ENCODE measurements at regions of chr4 and their contacts with region 1.

Region 1: DNA sequence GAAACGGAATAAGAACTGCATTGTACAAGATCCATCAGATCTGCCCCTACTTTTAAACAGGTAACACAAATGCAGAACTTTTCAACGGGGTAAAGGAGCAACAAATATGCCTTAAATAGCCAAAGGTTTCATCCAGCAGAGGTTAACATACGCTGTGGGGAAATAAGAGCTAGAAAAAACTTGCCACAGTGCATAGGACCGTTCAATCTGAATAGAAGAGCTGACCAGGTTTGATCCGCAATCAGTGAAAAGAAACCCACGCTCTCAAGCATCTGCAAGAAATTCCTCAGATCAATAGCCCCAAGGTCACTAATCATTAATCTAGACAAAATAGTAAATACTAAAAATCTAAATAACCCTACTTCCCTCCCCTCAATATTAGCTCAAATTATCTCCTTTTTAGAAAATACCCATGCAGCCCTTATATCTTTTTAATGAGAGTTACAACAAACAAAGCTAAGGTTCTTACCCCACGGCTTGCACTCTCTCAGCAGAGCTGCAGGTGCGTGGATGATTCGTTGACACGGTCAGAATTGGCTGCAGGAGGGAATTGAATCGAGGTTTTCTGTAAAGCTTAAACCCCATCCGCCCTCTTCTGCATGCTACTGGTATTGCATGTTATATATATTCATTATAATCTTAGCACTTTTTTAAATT is at the start of gene TLR10:
- DNase-seq: peak in 13 of 35 experiments; percentile 18 to 73 (median 28)
- ATAC-seq: peak; percentile 51 to 73 (median 64)
- H3K4me3 ChIP-seq: no peak within 1 kb of the TSS
- H3K4me3 Mint-ChIP-seq: peak within 1 kb of the TSS in 1 of 3 donors; percentile 71
- H3K27ac ChIP-seq: no peak within 1 kb of the TSS
- H3K27ac Mint-ChIP-seq: peak within 1 kb of the TSS in 1 of 2 donors; percentile 44
- H3K4me1 ChIP-seq: peaks cover 0 to 2% of the 10 kb centered on the region in 2 experiments
- H3K4me1 Mint-ChIP-seq: peaks cover 3 to 6% (median 5%) of the 10 kb centered on the region in 3 donors
- H3K27me3 ChIP-seq: no peaks in the 10 kb centered on the region
- H3K27me3 Mint-ChIP-seq: no peaks in the 10 kb centered on the region
- total RNA-seq, gene TLR10: 0.47 to 2.6 (median 0.96) TPM

Region 2: GRCh38 chr4:38062088-38062893 is 720.3 kb before region 1 on chr4:
- CTCF ChIA-PET with region 1: interaction called, 3 to 13 read pairs
- POLR2A ChIA-PET with region 1: no interaction called
- DNase-seq: peak; percentile 9 to 82 (median 48)
- ATAC-seq: peak; percentile 55 to 76 (median 65)
- H3K4me3 ChIP-seq: peak overlapping the region; percentile 26 to 39
- H3K4me3 Mint-ChIP-seq: peak overlapping the region; percentile 85 to 87 (median 86)
- H3K27ac ChIP-seq: no peak overlapping the region
- H3K27ac Mint-ChIP-seq: peak overlapping the region; percentile 70 to 81
- H3K4me1 ChIP-seq: peaks cover 0 to 7% of the 10 kb centered on the region in 2 experiments
- H3K4me1 Mint-ChIP-seq: peaks cover 14 to 16% (median 15%) of the 10 kb centered on the region in 3 donors
- H3K27me3 ChIP-seq: no peaks in the 10 kb centered on the region
- H3K27me3 Mint-ChIP-seq: no peaks in the 10 kb centered on the region

Region 3: DNA sequence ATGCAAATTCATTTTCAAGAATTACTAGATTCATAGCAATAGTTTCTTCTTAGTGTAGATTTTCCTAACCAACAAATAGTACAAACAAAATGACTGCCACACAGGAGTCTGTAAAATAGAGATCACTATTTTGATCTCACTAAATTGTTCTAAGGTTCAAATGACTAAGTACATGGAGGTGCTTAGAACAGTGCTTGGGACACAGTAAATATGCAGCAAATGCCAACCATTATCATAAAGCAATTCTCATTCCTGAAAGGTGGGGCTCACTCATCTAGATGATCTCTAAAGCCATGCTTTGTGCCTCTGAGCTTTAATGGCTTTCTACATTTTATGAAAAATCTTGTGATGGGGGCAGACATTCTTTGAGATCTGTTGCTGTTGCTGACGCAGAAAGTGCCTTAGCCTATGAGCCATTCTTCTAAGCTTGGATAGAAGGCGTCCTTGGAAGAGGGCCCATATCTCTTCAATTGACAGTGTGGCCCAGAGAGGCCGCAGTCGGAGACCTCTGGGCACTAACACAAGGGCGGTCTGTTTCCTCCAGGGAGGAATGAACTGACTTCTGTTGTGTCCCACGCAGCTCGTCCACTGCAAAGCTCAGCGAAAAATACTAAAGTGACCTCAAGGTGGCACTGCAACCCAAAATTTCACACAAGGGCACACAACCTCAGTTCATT is 23.3 kb before region 1 on chr4:
- CTCF ChIA-PET with region 1: interaction called, 20 to 32 read pairs
- POLR2A ChIA-PET with region 1: interaction called in 1 of 2 experiments, 3 read pairs
- DNase-seq: peak in 30 of 35 experiments; percentile 19 to 82 (median 43)
- ATAC-seq: peak; percentile 61 to 85 (median 75)
- H3K4me3 ChIP-seq: no peak overlapping the region
- H3K4me3 Mint-ChIP-seq: no peak overlapping the region
- H3K27ac ChIP-seq: no peak overlapping the region
- H3K27ac Mint-ChIP-seq: peak overlapping the region in 1 of 2 donors; percentile 8
- H3K4me1 ChIP-seq: peaks cover 0 to 10% of the 10 kb centered on the region in 2 experiments
- H3K4me1 Mint-ChIP-seq: peaks cover 20 to 27% (median 24%) of the 10 kb centered on the region in 3 donors
- H3K27me3 ChIP-seq: peaks cover 0 to 2% of the 10 kb centered on the region in 2 experiments
- H3K27me3 Mint-ChIP-seq: no peaks in the 10 kb centered on the region

Region 4: DNA sequence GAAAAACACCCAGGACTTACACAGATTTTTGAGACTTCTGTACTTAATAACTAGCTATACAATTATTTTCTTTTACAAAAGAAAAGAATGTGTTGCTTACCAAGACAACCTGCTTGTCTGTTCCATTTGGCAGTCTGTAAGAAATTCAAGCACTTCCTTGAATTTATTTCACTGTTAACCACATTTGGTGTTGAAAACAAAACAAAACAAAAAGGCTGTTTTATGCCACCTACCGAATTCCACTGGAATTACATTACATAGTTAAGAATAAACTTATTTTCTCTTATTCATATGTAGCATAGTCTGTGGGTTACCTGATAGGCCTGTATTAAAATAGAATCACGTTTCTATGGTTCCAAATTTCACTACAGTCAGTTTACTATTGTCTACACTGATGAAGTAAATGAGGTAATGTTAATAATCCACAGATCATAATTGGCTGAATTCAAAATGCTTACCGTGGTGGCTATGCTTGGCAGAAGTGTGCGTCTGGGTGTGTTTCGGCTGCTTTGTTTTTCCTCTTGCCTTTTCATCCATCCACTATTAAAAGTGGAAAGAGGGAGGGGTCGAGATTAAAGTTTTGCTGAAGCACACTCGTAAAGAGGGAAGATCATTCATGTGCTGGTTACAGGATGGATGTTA is 22.2 kb after region 1 on chr4 and contains the start of gene TLR1:
- CTCF ChIA-PET with region 1: interaction called, 7 to 43 read pairs
- POLR2A ChIA-PET with region 1: no interaction called
- DNase-seq: peak in 3 of 35 experiments; percentile 15 to 76 (median 27)
- ATAC-seq: peak; percentile 60 to 84 (median 78)
- H3K4me3 ChIP-seq: peak within 1 kb of the TSS; percentile 58 to 75
- H3K4me3 Mint-ChIP-seq: peak within 1 kb of the TSS; percentile 83 to 91 (median 85)
- H3K27ac ChIP-seq: peak within 1 kb of the TSS; percentile 75
- H3K27ac Mint-ChIP-seq: peak within 1 kb of the TSS; percentile 93 to 97
- H3K4me1 ChIP-seq: peaks cover 17 to 23% of the 10 kb centered on the region in 2 experiments
- H3K4me1 Mint-ChIP-seq: peaks cover 30 to 42% (median 42%) of the 10 kb centered on the region in 3 donors
- H3K27me3 ChIP-seq: no peaks in the 10 kb centered on the region
- H3K27me3 Mint-ChIP-seq: no peaks in the 10 kb centered on the region
- total RNA-seq, gene TLR1: 10.4 to 26.0 (median 18.0) TPM

Measured in T-cell (primary cell).